ENCODE measurements at regions of chr12 and their contacts with region 1.

Region 1: DNA sequence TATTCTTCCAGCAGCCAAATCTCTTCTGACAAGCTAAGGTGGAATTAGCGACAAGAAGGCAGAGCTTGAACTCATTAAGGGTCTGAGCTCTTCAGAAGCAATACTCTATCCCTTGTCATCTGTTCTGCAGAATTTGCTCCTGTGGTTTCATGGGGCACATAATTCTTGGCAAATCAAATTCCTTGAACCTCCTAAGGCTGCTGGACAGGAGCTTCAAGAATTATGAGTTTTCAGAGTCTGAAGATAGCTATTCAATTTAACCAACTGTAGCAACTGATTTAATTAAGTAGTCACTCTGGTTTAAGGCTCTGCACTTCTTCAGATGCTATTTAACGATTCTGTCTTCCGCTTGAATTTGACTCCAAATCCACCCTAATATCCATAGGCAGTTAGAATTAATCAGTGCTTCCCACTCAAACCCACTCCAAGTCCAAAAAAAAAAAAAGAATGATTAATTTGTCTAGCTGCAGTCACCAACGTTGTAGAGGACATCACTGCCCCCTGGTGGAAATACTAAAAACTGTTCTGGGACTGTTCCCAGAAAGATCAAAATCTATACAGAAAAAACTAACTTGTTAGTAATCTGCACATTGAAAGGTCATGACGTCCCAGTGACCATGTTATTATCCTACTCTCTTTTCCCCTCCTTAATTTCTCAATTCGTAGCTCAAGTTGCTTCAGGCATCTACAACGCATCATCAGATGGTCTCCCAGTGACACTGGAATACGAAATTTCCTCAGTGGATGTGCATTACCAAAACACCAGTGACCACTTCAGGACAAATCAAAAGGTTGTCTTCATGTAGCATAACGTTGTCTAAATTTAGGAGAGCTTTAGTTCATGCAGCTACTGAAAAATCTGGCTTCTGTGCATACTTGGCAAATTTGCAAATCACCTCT is 169.8 kb downstream of the KIF21A start:
- DNase-seq: peak; percentile 22
- ATAC-seq: peak; percentile 61; the same call in 1 of the 2 replicates
- H3K4me3 ChIP-seq: no peak overlapping the region
- H3K27ac ChIP-seq: no peak overlapping the region
- H3K4me1 ChIP-seq: no peaks in the 10 kb centered on the region
- H3K27me3 ChIP-seq: no peaks in the 10 kb centered on the region
- CTCF ChIP-seq: peak; percentile 35 to 74 (median 60); a peak in 5 of 6 replicates
- POLR2A ChIP-seq: no peak
- RAD21 ChIP-seq: peak; percentile 70

Region 2: GRCh38 chr12:38327356-38327755 is 945.8 kb before region 1 on chr12:
- CTCF ChIA-PET with region 1: interaction called, 11 read pairs
- POLR2A ChIA-PET with region 1: no interaction called
- RAD21 ChIA-PET with region 1: no interaction called
- intact Hi-C with region 1: loop called (anchors 1 kb)
- DNase-seq: no peak
- ATAC-seq: no peak
- H3K4me3 ChIP-seq: no peak overlapping the region
- H3K27ac ChIP-seq: no peak overlapping the region
- H3K4me1 ChIP-seq: no peaks in the 10 kb centered on the region
- H3K27me3 ChIP-seq: no peaks in the 10 kb centered on the region
- CTCF ChIP-seq: no peak
- POLR2A ChIP-seq: no peak
- RAD21 ChIP-seq: no peak

Region 3: GRCh38 chr12:38332814-38333213 is 940.3 kb before region 1 on chr12:
- CTCF ChIA-PET with region 1: interaction called, 11 read pairs
- POLR2A ChIA-PET with region 1: no interaction called
- RAD21 ChIA-PET with region 1: no interaction called
- intact Hi-C with region 1: loop called (anchors 1 kb)
- DNase-seq: no peak
- ATAC-seq: no peak
- H3K4me3 ChIP-seq: no peak overlapping the region
- H3K27ac ChIP-seq: no peak overlapping the region
- H3K4me1 ChIP-seq: no peaks in the 10 kb centered on the region
- H3K27me3 ChIP-seq: no peaks in the 10 kb centered on the region
- CTCF ChIP-seq: no peak
- POLR2A ChIP-seq: no peak
- RAD21 ChIP-seq: no peak

Region 4: GRCh38 chr12:38921025-38921677 is 352.0 kb before region 1 on chr12:
- CTCF ChIA-PET with region 1: interaction called, 99 read pairs
- POLR2A ChIA-PET with region 1: no interaction called
- RAD21 ChIA-PET with region 1: interaction called, 8 to 15 read pairs
- intact Hi-C with region 1: loop called (anchors 1 kb)
- DNase-seq: peak; percentile 69
- ATAC-seq: peak; percentile 90
- H3K4me3 ChIP-seq: no peak overlapping the region
- H3K27ac ChIP-seq: no peak overlapping the region
- H3K4me1 ChIP-seq: no peaks in the 10 kb centered on the region
- H3K27me3 ChIP-seq: no peaks in the 10 kb centered on the region
- CTCF ChIP-seq: peak; percentile 64 to 80 (median 70); a peak in 5 of 6 replicates
- POLR2A ChIP-seq: no peak
- RAD21 ChIP-seq: peak; percentile 76

Region 5: GRCh38 chr12:39033782-39034181 is 239.3 kb before region 1 on chr12:
- CTCF ChIA-PET with region 1: no interaction called
- POLR2A ChIA-PET with region 1: no interaction called
- RAD21 ChIA-PET with region 1: no interaction called
- intact Hi-C with region 1: no loop called
- DNase-seq: no peak
- ATAC-seq: no peak
- H3K4me3 ChIP-seq: no peak overlapping the region
- H3K27ac ChIP-seq: no peak overlapping the region
- H3K4me1 ChIP-seq: no peaks in the 10 kb centered on the region
- H3K27me3 ChIP-seq: no peaks in the 10 kb centered on the region
- CTCF ChIP-seq: no peak
- POLR2A ChIP-seq: no peak
- RAD21 ChIP-seq: no peak

Region 6: GRCh38 chr12:39103552-39104165 is 169.5 kb before region 1 on chr12:
- CTCF ChIA-PET with region 1: interaction called, 12 read pairs
- POLR2A ChIA-PET with region 1: no interaction called
- RAD21 ChIA-PET with region 1: interaction called, 3 to 5 read pairs
- intact Hi-C with region 1: loop called (anchors 5 kb)
- DNase-seq: peak; percentile 70
- ATAC-seq: peak; percentile 98
- H3K4me3 ChIP-seq: no peak overlapping the region
- H3K27ac ChIP-seq: no peak overlapping the region
- H3K4me1 ChIP-seq: no peaks in the 10 kb centered on the region
- H3K27me3 ChIP-seq: no peaks in the 10 kb centered on the region
- CTCF ChIP-seq: peak; percentile 67 to 85 (median 70)
- POLR2A ChIP-seq: no peak
- RAD21 ChIP-seq: peak; percentile 87

Region 7: DNA sequence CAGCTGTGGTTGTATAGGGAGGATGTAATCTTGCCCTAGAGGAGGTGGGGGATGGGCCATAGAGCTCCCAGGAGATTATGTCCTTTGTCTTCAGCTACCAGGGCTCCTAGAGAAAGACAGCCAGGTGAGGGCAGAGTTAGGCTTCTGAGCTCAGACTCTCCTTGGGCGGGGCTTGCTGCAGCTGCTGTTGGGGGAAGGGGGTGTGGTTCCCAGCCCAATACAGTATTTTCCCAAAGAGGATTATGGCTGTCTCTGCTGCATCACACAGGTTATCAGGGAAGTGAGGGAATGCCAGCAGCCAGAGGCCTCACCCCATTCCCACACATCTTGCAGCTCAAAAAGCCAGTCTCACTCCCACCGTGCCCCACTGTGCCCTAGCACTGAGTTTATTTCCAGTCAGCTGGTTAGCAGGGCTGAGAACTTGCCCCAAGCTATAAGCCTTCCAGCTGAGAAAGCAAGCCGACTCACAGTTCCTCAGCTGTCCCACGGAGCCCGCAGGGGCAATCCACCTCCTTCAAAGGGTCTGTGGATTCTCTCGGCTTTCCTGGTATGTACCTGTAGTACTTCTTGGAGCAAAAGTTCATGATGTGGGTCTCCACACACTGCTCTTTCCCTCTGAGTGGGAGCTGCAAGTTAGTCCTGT is 150.4 kb before region 1 on chr12:
- CTCF ChIA-PET with region 1: interaction called, 32 read pairs
- POLR2A ChIA-PET with region 1: interaction called, 5 read pairs
- RAD21 ChIA-PET with region 1: interaction called in 1 of 2 experiments, 7 read pairs
- intact Hi-C with region 1: loop called (anchors 5 kb)
- DNase-seq: peak; percentile 28
- ATAC-seq: peak; percentile 87
- H3K4me3 ChIP-seq: no peak overlapping the region
- H3K27ac ChIP-seq: no peak overlapping the region
- H3K4me1 ChIP-seq: peaks cover 0 to 20% of the 10 kb centered on the region in 2 experiments; a peak in 2 of 4 replicates
- H3K27me3 ChIP-seq: no peaks in the 10 kb centered on the region
- CTCF ChIP-seq: peak in 2 of 3 experiments; percentile 20 to 23; a peak in 2 of 6 replicates
- POLR2A ChIP-seq: no peak
- RAD21 ChIP-seq: peak; percentile 53

Region 8: DNA sequence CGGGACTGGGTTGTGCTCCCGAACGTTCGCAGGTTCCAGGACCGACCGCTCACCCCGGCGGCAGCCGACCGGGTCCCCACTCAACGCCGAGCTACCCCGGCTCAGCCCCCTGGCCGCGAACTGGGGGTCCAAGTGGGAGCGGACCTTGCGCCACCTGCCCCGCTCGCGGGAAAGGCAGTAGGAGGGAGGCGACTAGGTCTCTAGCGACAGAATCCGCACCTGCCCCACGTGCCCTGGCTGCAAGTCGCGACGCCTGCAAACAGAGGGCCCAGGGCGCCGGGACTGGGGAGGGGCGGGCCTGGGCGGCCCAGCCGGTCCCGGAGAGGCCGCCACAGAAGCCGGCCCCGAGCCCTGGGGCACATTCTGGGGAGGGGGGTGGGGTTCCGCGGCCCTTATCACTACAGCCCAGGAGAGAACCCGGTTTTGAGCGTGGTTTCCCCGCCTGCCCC is 128.5 kb before region 1 on chr12:
- CTCF ChIA-PET with region 1: no interaction called
- POLR2A ChIA-PET with region 1: no interaction called
- RAD21 ChIA-PET with region 1: no interaction called
- intact Hi-C with region 1: no loop called
- DNase-seq: no peak
- ATAC-seq: no peak
- H3K4me3 ChIP-seq: no peak overlapping the region
- H3K27ac ChIP-seq: no peak overlapping the region
- H3K4me1 ChIP-seq: no peaks in the 10 kb centered on the region
- H3K27me3 ChIP-seq: no peaks in the 10 kb centered on the region
- CTCF ChIP-seq: no peak
- POLR2A ChIP-seq: no peak
- RAD21 ChIP-seq: no peak

Measured in HCT116 (cell line).